ENCODE measurements at regions of chr9 and their contacts with region 1.

Region 1: GRCh38 chr9:125407974-125408900 is 146.6 kb downstream of the GAPVD1 start:
- DNase-seq: peak; percentile 80 to 91
- H3K4me3 ChIP-seq: peak overlapping the region; percentile 69
- H3K4me3 Mint-ChIP-seq: peak overlapping the region; percentile 71
- H3K27ac Mint-ChIP-seq: peak overlapping the region; percentile 69
- H3K4me1 ChIP-seq: peaks cover 15% of the 10 kb centered on the region
- H3K4me1 Mint-ChIP-seq: peaks cover 10% of the 10 kb centered on the region
- H3K27me3 ChIP-seq: no peaks in the 10 kb centered on the region
- H3K27me3 Mint-ChIP-seq: no peaks in the 10 kb centered on the region
- CTCF ChIP-seq: peak; percentile 85 to 86

Region 2: DNA sequence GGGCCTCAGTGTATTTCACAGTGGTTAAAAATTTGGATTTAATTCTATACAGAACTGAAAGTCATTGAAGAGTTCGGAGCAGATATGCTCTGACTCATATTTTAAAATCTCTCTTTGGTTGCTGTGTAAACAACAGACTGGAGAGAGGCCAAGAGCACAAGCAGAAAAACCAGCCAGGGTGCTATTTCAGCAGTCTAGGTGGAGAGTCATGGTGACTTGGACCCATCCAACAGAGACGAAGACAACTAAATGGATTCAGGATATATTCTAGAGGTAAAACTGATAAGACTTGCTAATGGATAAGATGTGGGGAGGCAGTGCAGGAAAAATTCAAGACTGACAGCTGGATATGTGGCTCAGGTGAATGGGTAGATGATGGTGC is 129.8 kb after region 1 on chr9:
- CTCF ChIA-PET with region 1: no interaction called
- POLR2A ChIA-PET with region 1: no interaction called
- intact Hi-C with region 1: loop called (anchors 10 kb)
- DNase-seq: peak; percentile 52 to 55
- H3K4me3 ChIP-seq: no peak overlapping the region
- H3K4me3 Mint-ChIP-seq: peak overlapping the region; percentile 9
- H3K27ac Mint-ChIP-seq: peak overlapping the region; percentile 14
- H3K4me1 ChIP-seq: peaks cover 13% of the 10 kb centered on the region
- H3K4me1 Mint-ChIP-seq: peaks cover 12% of the 10 kb centered on the region
- H3K27me3 ChIP-seq: no peaks in the 10 kb centered on the region
- H3K27me3 Mint-ChIP-seq: no peaks in the 10 kb centered on the region
- CTCF ChIP-seq: no peak

Region 3: DNA sequence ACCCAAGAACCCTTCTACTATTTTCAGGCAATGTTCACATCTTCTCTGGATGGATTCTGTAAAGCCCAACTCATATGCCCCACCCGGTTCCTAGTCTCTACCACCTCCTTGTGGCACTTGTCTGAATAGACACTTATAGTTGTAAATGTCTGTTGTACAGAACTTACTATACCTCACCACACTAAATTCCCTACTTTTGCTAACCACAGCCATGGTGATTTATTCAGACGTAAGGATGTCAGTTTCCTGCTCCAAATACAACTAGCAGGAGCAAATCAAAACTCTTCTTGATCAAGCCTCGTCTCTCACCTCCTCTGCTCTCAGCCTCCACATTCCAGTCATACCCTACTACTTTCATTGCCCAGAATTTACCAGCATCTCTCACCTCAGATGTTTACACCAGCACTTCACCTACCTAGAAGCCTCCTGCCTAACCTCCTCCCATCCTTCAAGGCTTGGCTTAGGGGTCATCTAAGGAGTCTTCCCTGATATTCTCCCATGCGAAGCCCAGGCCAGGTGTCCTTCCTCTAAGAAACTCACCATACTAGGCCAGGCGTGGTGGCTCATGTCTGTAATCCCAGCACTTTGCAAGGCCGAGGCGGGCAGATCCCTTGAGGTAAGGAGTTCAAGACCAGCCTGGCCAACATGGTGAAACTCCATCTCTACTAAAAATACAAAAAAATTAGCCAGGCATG is 223.3 kb after region 1 on chr9:
- CTCF ChIA-PET with region 1: interaction called, 7 read pairs
- POLR2A ChIA-PET with region 1: no interaction called
- intact Hi-C with region 1: loop called (anchors 1 kb)
- DNase-seq: peak in 1 of 2 experiments; percentile 56
- H3K4me3 ChIP-seq: no peak overlapping the region
- H3K4me3 Mint-ChIP-seq: no peak overlapping the region
- H3K27ac Mint-ChIP-seq: peak overlapping the region; percentile 29
- H3K4me1 ChIP-seq: peaks cover 27% of the 10 kb centered on the region
- H3K4me1 Mint-ChIP-seq: peaks cover 37% of the 10 kb centered on the region
- H3K27me3 ChIP-seq: no peaks in the 10 kb centered on the region
- H3K27me3 Mint-ChIP-seq: no peaks in the 10 kb centered on the region
- CTCF ChIP-seq: peak; percentile 49 to 73

Region 4: GRCh38 chr9:125746017-125746773 is 338.0 kb after region 1 on chr9:
- CTCF ChIA-PET with region 1: interaction called, 4 read pairs
- POLR2A ChIA-PET with region 1: no interaction called
- intact Hi-C with region 1: loop called (anchors 1 kb)
- DNase-seq: peak; percentile 97 to 98
- H3K4me3 ChIP-seq: peak overlapping the region; percentile 88
- H3K4me3 Mint-ChIP-seq: peak overlapping the region; percentile 93
- H3K27ac Mint-ChIP-seq: peak overlapping the region; percentile 79
- H3K4me1 ChIP-seq: peaks cover 16% of the 10 kb centered on the region
- H3K4me1 Mint-ChIP-seq: peaks cover 32% of the 10 kb centered on the region
- H3K27me3 ChIP-seq: no peaks in the 10 kb centered on the region
- H3K27me3 Mint-ChIP-seq: peaks cover 7% of the 10 kb centered on the region
- CTCF ChIP-seq: no peak

Region 5: GRCh38 chr9:126146254-126147145 is 738.3 kb after region 1 on chr9:
- CTCF ChIA-PET with region 1: no interaction called
- POLR2A ChIA-PET with region 1: no interaction called
- intact Hi-C with region 1: loop called (anchors 1 kb)
- DNase-seq: peak; percentile 89 to 93
- H3K4me3 ChIP-seq: peak overlapping the region; percentile 28
- H3K4me3 Mint-ChIP-seq: peak overlapping the region; percentile 77
- H3K27ac Mint-ChIP-seq: peak overlapping the region; percentile 97
- H3K4me1 ChIP-seq: peaks cover 23% of the 10 kb centered on the region
- H3K4me1 Mint-ChIP-seq: peaks cover 31% of the 10 kb centered on the region
- H3K27me3 ChIP-seq: no peaks in the 10 kb centered on the region
- H3K27me3 Mint-ChIP-seq: no peaks in the 10 kb centered on the region
- CTCF ChIP-seq: peak; percentile 50 to 81

Region 6: DNA sequence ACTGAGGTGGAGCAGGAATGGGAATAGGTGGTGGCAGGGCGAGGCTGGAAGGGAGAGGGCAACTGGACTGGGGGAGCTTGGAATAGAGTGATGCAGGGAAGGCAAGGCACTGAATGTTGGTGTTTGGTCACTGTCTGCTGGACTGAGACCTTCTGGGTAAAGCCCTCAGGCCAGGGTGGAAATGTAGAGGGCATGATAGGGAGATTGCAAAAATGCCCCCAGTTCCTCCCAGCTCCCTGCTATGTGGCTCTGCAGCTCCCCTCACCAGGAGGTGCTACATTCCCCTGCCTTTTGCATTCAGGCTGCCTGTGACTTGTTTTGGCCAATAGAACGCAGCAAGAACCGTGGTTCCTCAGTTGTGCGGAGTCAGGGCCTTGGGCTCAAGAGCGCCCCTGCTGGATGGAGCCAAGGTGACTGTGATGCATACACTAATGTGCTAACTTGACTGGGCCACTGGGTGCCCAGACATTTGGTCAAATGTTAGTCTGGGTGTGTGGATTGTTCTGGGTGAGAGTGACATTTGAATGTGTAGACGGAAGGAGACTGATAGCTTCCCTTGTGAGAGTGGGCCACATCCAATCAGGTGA is 795.0 kb after region 1 on chr9:
- CTCF ChIA-PET with region 1: interaction called, 12 read pairs
- POLR2A ChIA-PET with region 1: no interaction called
- intact Hi-C with region 1: no loop called
- DNase-seq: no peak
- H3K4me3 ChIP-seq: no peak overlapping the region
- H3K4me3 Mint-ChIP-seq: no peak overlapping the region
- H3K27ac Mint-ChIP-seq: no peak overlapping the region
- H3K4me1 ChIP-seq: no peaks in the 10 kb centered on the region
- H3K4me1 Mint-ChIP-seq: no peaks in the 10 kb centered on the region
- H3K27me3 ChIP-seq: no peaks in the 10 kb centered on the region
- H3K27me3 Mint-ChIP-seq: peaks cover 3% of the 10 kb centered on the region
- CTCF ChIP-seq: peak in 1 of 2 experiments; percentile 29

Region 7: GRCh38 chr9:126228781-126229444 is 820.7 kb after region 1 on chr9:
- CTCF ChIA-PET with region 1: no interaction called
- POLR2A ChIA-PET with region 1: no interaction called
- intact Hi-C with region 1: loop called (anchors 2 kb)
- DNase-seq: peak; percentile 74 to 80
- H3K4me3 ChIP-seq: no peak overlapping the region
- H3K4me3 Mint-ChIP-seq: no peak overlapping the region
- H3K27ac Mint-ChIP-seq: no peak overlapping the region
- H3K4me1 ChIP-seq: no peaks in the 10 kb centered on the region
- H3K4me1 Mint-ChIP-seq: no peaks in the 10 kb centered on the region
- H3K27me3 ChIP-seq: no peaks in the 10 kb centered on the region; the same call in 1 of the 2 replicates
- H3K27me3 Mint-ChIP-seq: peaks cover 7% of the 10 kb centered on the region
- CTCF ChIP-seq: peak; percentile 90 to 91

Measured in Caco-2 (cell line).